HepG2 (cell line): ENCODE measurements at regions of chr5 and their contacts with region 1.

Region 1: DNA sequence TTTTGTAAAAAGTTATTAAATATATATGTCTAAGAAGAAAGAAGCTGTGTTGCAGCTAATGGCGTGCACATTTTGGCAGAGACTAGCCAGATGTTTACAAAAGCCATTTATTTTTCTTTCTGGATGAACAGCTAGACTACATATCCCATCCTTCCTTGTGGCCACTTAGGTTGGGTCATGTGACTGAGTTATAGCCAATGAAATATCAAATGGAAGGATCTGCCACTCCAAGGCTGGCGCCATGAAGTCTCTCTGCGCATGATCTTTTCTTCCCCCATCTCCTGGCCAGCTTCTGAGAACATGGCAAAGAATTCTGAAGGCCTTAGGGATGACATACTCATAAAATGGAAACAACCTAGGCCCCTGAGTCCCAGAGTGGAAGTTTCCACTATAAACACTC is 244.2 kb upstream of the DAB2 start:
- DNase-seq: no peak
- ATAC-seq: no peak
- H3K4me3 ChIP-seq: no peak overlapping the region
- H3K27ac ChIP-seq: no peak overlapping the region
- H3K4me1 ChIP-seq: no peaks in the 10 kb centered on the region
- H3K27me3 ChIP-seq: no peaks in the 10 kb centered on the region
- CTCF ChIP-seq: no peak
- EP300 ChIP-seq: no peak
- POLR2A ChIP-seq: no peak
- RAD21 ChIP-seq: no peak

Region 2: DNA sequence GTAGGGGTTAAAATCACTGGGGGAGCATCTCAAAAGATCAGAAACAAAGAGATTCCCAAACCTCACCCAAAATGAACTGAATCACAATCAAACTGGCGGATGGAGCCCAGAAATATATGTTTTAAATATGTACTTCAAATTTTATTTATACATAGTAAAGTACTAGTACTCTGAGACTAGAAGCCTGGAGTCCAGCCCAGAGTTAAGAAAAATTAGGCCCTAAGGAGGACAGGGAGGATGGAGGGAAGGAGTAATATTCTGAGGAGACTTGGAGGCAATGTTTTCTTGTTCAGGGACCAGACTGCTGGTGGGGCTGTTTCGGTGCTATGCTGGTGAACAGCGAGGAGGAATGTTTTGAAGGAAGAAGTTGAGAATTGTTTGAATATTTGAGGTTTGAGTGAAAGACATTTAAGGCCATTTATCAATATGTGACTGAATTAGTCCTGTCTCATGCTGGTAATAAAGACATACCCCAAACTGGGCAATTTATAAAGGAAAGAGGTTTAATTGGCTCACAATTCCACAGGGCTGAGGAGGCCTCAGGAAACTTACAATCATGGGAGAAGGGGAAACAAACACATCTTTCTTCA is 308.2 kb after region 1 on chr5:
- CTCF ChIA-PET with region 1: no interaction called
- POLR2A ChIA-PET with region 1: no interaction called
- in situ Hi-C with region 1: no loop called
- intact Hi-C with region 1: no loop called
- DNase-seq: no peak
- ATAC-seq: no peak
- H3K4me3 ChIP-seq: no peak overlapping the region
- H3K27ac ChIP-seq: no peak overlapping the region
- H3K4me1 ChIP-seq: no peaks in the 10 kb centered on the region
- H3K27me3 ChIP-seq: no peaks in the 10 kb centered on the region
- CTCF ChIP-seq: no peak
- EP300 ChIP-seq: no peak
- POLR2A ChIP-seq: no peak
- RAD21 ChIP-seq: no peak

Region 3: GRCh38 chr5:41071975-41072374 is 1403.0 kb after region 1 on chr5:
- CTCF ChIA-PET with region 1: no interaction called
- POLR2A ChIA-PET with region 1: no interaction called
- in situ Hi-C with region 1: no loop called
- intact Hi-C with region 1: loop called (anchors 5 kb)
- DNase-seq: no peak
- ATAC-seq: no peak
- H3K4me3 ChIP-seq: no peak overlapping the region
- H3K27ac ChIP-seq: no peak overlapping the region
- H3K4me1 ChIP-seq: no peaks in the 10 kb centered on the region
- H3K27me3 ChIP-seq: no peaks in the 10 kb centered on the region
- CTCF ChIP-seq: no peak
- EP300 ChIP-seq: no peak
- POLR2A ChIP-seq: no peak
- RAD21 ChIP-seq: no peak